Endothelial cell of umbilical vein (primary cell): ENCODE measurements at regions of chr13 and their contacts with region 1.

Region 1: GRCh38 chr13:70310396-70311119 is 202.3 kb upstream of the KLHL1 start:
- DNase-seq: peak; percentile 34
- H3K4me3 ChIP-seq: no peak overlapping the region
- H3K27ac ChIP-seq: no peak overlapping the region
- H3K4me1 ChIP-seq: no peaks in the 10 kb centered on the region
- H3K27me3 ChIP-seq: no peaks in the 10 kb centered on the region
- CTCF ChIP-seq: peak; percentile 4 to 22
- POLR2A ChIP-seq: no peak

Region 2: DNA sequence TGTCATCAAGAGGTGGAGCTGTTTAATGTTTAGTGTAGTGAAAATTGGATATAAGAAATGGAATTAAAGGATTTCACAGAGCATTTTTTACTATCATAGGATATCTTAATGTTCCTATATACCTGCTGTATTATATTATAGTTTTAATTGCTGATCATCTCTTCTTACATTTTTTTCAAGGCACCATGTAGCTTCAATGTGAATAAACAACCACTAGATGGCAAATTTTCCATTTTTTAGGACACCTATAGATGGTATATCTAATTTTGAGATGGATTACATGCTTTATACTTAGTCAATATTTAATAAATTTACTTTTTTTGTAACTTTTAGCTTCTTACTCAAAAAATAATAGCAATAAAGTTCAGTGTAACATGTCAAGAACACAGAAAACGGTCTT is 211.9 kb before region 1 on chr13:
- CTCF ChIA-PET with region 1: interaction called, 9 read pairs
- POLR2A ChIA-PET with region 1: no interaction called
- dilution Hi-C with region 1: no loop called
- intact Hi-C with region 1: loop called (anchors 5 kb)
- DNase-seq: peak; percentile 14
- H3K4me3 ChIP-seq: no peak overlapping the region
- H3K27ac ChIP-seq: no peak overlapping the region
- H3K4me1 ChIP-seq: no peaks in the 10 kb centered on the region
- H3K27me3 ChIP-seq: no peaks in the 10 kb centered on the region
- CTCF ChIP-seq: peak in 1 of 2 donors; percentile 28
- POLR2A ChIP-seq: no peak

Region 3: GRCh38 chr13:70162141-70162540 is 148.4 kb before region 1 on chr13:
- CTCF ChIA-PET with region 1: no interaction called
- POLR2A ChIA-PET with region 1: no interaction called
- dilution Hi-C with region 1: no loop called
- intact Hi-C with region 1: no loop called
- DNase-seq: no peak
- H3K4me3 ChIP-seq: no peak overlapping the region
- H3K27ac ChIP-seq: no peak overlapping the region
- H3K4me1 ChIP-seq: no peaks in the 10 kb centered on the region
- H3K27me3 ChIP-seq: no peaks in the 10 kb centered on the region
- CTCF ChIP-seq: no peak
- POLR2A ChIP-seq: no peak